Endothelial cell of umbilical vein (primary cell): ENCODE measurements at regions of chr9 and their contacts with region 1.

Region 1: GRCh38 chr9:110777196-110777875 is 108.7 kb downstream of the MUSK start:
- DNase-seq: peak; percentile 68
- H3K4me3 ChIP-seq: no peak overlapping the region
- H3K27ac ChIP-seq: peak overlapping the region; percentile 20
- H3K4me1 ChIP-seq: peaks cover 20% of the 10 kb centered on the region
- H3K27me3 ChIP-seq: no peaks in the 10 kb centered on the region
- CTCF ChIP-seq: no peak
- POLR2A ChIP-seq: no peak

Region 2: DNA sequence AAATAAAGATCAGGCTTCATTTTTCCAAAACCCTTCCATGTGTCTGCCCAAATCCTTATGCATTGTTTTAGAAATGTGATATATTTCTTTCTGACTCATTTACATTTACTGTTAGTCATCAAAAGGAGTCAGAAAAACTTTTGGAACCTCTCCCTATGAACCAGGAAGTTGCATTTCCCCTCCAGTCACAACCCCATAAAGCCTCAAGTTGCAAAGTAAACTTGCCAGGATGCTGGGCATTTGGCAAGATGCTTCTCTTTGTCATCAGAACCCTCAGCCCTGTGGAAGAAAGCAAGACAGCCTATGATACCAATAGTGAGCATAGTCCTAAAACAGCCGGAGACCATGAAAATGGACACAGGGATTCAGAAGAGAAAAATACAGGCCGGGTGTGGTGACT is 24.6 kb before region 1 on chr9:
- CTCF ChIA-PET with region 1: no interaction called
- POLR2A ChIA-PET with region 1: interaction called, 3 read pairs
- dilution Hi-C with region 1: no loop called
- intact Hi-C with region 1: loop called (anchors 2 kb)
- DNase-seq: peak; percentile 89
- H3K4me3 ChIP-seq: no peak overlapping the region
- H3K27ac ChIP-seq: peak overlapping the region; percentile 82
- H3K4me1 ChIP-seq: peaks cover 24% of the 10 kb centered on the region
- H3K27me3 ChIP-seq: no peaks in the 10 kb centered on the region
- CTCF ChIP-seq: no peak
- POLR2A ChIP-seq: no peak